ENCODE measurements at regions of chr1 and their contacts with region 1.

Region 1: GRCh38 chr1:211514030-211514754 is 22.2 kb upstream of the RD3 start:
- DNase-seq: peak; percentile 81
- ATAC-seq: peak; percentile 84

Region 2: GRCh38 chr1:211469938-211470529 is 44.2 kb before region 1 on chr1:
- intact Hi-C with region 1: loop called (anchors 5 kb)
- DNase-seq: peak; percentile 89
- ATAC-seq: peak; percentile 95

Region 3: DNA sequence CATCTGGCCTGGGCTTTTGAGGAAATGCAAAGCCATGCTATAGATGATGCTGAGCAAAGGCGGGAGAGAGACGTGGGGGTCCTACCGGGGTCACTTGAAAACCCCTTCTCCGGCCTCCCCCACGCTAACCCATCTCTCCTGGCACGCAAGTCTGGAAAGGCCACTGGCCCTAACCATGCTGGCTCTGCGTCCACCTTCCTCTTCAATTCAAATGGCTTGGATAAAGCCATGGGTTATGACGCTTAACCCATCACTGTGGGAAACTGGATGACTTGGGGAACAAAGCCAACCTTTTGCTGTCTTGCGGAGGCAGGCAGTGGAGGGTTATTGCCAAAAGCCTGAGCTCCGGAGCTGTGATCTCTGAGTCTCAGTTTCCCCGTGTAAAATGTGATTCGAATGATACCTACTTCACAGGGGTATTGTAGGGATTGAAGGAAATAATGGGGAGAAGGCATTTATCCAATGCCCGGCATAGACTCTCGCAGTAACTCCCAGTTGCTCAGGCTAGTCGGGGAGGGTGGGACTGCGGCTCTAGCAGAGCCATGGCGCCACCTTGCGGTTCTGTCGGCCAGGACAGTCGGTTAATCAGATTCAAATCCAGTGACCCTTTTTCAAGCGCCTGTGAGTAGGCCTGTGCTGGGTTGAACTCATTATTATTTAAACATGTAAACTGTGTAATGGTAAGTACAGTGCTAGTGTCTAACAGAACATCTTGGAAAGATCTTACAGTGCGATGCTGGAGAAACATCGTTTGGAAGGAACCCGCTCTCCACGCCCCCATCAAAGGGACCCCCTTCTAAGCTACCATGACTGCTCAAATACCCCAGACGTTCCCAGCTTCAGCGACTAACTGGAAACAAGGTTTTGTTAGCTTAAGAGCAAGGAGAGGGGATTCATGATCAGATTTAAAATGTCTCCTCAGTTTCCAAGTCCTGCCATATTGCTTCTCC is 140.9 kb after region 1 on chr1:
- intact Hi-C with region 1: loop called (anchors 10 kb)
- DNase-seq: peak; percentile 93
- ATAC-seq: peak; percentile 97

Measured in left ventricle myocardium superior (tissue), 1 donor.